Activated T-helper 1 cell treated with anti-CD3 and anti-CD28 coated beads, Interleukin-12 subunit alpha, Interleukin-12 subunit beta, Interleukin-2, Interleukin-4 antibody, amounts not matched to agents 30 ng/mL and 10 ng/mL and 1 ng/mL, durations not matched to agents 14 hours and 24 hours and 36 hours (primary cell): ENCODE measurements at regions of chr18 and their contacts with region 1.

Region 1: GRCh38 chr18:3012964-3013804 is at the start of gene LPIN2:
- DNase-seq: peak; percentile 95
- H3K4me3 Mint-ChIP-seq: peak within 1 kb of the TSS; percentile 92
- H3K27ac Mint-ChIP-seq: peak within 1 kb of the TSS; percentile 90
- H3K4me1 Mint-ChIP-seq: peaks cover 65% of the 10 kb centered on the region
- H3K27me3 Mint-ChIP-seq: no peaks in the 10 kb centered on the region
- total RNA-seq, gene LPIN2: 86.6 and 91.8 TPM in 2 replicates

Region 2: GRCh38 chr18:2958819-2959298 is 54.3 kb before region 1 on chr18:
- intact Hi-C with region 1: loop called (anchors 1 kb)
- DNase-seq: peak; percentile 46
- H3K4me3 Mint-ChIP-seq: peak overlapping the region; percentile 81
- H3K27ac Mint-ChIP-seq: peak overlapping the region; percentile 99
- H3K4me1 Mint-ChIP-seq: peaks cover 93% of the 10 kb centered on the region
- H3K27me3 Mint-ChIP-seq: no peaks in the 10 kb centered on the region

Region 3: DNA sequence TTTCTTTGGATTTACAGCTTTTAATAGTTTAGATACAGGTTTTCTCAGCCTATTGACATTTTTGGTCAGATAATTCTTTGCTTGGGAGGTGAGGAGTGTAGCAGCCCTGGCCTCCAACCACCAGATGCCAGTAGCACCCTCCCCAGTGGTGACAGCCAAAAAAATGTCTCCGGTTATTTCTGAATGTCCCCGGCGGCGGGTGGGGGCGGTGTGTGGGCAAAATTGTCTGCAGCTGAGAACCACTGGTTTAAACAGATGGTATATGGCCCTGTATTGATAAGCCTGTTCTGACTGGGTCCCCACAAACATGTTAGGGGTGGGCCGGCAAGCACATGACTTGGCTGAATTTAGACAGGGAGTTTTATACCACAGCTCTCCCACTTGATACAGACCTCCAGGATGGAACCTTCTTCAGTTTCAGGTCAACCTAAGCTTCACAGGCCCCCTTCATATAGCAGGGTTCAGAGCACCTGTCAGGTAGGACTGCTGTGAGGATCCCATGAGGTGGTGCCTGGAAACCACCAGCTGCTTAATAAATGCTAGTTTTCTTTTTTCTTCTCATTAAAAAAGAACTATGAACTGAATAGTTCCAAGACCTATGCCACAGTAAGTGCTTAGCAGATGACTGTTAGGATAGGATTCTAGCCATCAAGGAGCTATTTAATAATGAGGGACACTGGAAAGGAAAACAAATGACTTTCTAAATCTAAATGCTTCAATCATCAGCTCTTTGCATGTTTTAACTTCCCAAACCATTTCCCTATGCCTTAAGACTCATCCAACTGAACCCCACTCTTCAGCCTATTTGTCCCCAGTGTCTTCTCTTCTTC is 18.4 kb before region 1 on chr18:
- intact Hi-C with region 1: loop called (anchors 1 kb)
- DNase-seq: peak; percentile 58
- H3K4me3 Mint-ChIP-seq: peak overlapping the region; percentile 60
- H3K27ac Mint-ChIP-seq: peak overlapping the region; percentile 83
- H3K4me1 Mint-ChIP-seq: peaks cover 82% of the 10 kb centered on the region
- H3K27me3 Mint-ChIP-seq: no peaks in the 10 kb centered on the region

Region 4: GRCh38 chr18:3029215-3029952 is 16.2 kb after region 1 on chr18:
- intact Hi-C with region 1: loop called (anchors 2 kb)
- DNase-seq: no peak
- H3K4me3 Mint-ChIP-seq: no peak overlapping the region
- H3K27ac Mint-ChIP-seq: no peak overlapping the region
- H3K4me1 Mint-ChIP-seq: peaks cover 10% of the 10 kb centered on the region
- H3K27me3 Mint-ChIP-seq: no peaks in the 10 kb centered on the region

Region 5: GRCh38 chr18:3037423-3037915 is 24.3 kb after region 1 on chr18:
- intact Hi-C with region 1: loop called (anchors 1 kb)
- DNase-seq: peak; percentile 34
- H3K4me3 Mint-ChIP-seq: peak overlapping the region; percentile 50
- H3K27ac Mint-ChIP-seq: peak overlapping the region; percentile 82
- H3K4me1 Mint-ChIP-seq: peaks cover 33% of the 10 kb centered on the region
- H3K27me3 Mint-ChIP-seq: no peaks in the 10 kb centered on the region

Region 6: DNA sequence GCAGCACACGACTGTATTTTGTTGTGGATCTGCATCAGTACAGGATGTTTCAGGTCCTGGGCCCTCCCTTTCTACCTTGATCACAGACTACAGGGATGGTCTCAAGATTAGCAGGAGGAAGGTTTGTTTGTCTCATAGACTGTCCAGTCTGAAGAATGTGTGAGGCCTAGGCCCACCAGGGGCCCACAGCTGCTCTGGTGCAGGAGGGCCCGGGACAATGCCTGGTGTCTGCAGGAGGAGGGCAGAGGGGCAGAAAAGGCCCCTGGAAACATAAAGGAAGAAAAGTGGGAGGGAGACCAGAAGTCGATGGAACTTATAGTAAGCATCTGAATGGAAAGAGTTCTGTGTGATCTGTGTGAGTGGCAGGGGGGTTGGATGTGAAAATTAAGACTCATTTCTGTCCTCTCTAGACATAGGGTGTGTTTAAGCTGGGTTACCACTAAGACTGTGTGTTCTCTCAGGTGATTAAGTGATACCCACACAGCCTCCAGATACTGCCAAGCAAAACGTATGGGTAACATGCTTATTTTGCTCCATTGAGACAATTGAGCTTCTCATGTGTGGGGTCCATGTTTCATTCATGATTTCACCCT is 33.1 kb after region 1 on chr18:
- intact Hi-C with region 1: loop called (anchors 1 kb)
- DNase-seq: no peak
- H3K4me3 Mint-ChIP-seq: no peak overlapping the region
- H3K27ac Mint-ChIP-seq: peak overlapping the region; percentile 77
- H3K4me1 Mint-ChIP-seq: peaks cover 34% of the 10 kb centered on the region
- H3K27me3 Mint-ChIP-seq: no peaks in the 10 kb centered on the region

Region 7: DNA sequence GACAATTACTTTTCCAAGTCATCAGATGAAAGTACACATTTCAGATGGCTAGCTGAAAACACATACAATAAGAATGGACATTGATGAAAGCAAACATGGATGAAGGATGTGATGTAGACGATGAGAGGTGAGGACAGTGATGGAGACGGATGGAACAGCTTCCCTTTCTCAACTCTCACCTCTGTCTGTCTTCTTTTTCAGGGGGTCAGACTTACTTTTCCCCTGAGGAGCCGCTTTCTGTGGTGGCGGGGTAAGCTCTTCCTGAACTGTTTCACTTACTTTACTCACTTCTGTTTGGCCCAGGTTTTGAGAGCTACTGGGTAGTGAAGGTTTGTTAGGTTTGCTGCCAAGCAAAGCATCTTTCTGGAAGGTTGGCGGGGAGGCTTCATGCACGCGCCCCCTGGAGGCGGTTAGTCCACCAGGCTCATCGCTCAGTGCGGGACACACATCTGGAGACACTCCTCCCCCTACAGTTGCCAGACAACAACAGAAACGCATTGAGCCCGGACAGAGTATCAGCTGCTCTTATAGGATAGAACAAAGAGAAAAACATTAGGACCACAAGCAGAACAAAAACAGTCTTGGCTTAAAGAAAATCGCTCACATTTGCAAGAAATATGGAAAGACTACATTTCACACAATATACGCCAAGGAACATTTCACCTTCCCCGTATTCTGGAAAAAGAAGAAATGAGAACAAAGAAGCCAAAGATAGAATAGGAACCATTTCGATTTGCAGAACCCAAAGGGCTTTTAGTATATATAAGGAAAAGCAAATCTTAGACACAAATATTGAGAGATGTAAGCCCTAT is 116.1 kb after region 1 on chr18:
- intact Hi-C with region 1: loop called (anchors 1 kb)
- DNase-seq: peak; percentile 70
- H3K4me3 Mint-ChIP-seq: no peak overlapping the region
- H3K27ac Mint-ChIP-seq: peak overlapping the region; percentile 27
- H3K4me1 Mint-ChIP-seq: peaks cover 10% of the 10 kb centered on the region
- H3K27me3 Mint-ChIP-seq: peaks cover 3% of the 10 kb centered on the region